ENCODE measurements at regions of chr2 and their contacts with region 1.

Region 1: GRCh38 chr2:126586317-126586716 is 69.6 kb upstream of the GYPC start:
- DNase-seq: peak in 4 of 5 donors; percentile 46 to 59 (median 50)
- ATAC-seq: peak; percentile 84 to 98 (median 90)
- H3K4me3 ChIP-seq: no peak overlapping the region
- H3K27ac ChIP-seq: peak overlapping the region in 11 of 12 donors; percentile 8 to 81 (median 71)
- H3K4me1 ChIP-seq: peaks cover 0 to 14% (median 0%) of the 10 kb centered on the region in 12 donors
- H3K27me3 ChIP-seq: no peaks in the 10 kb centered on the region
- CTCF ChIP-seq: no peak
- POLR2A ChIP-seq: no peak

Region 2: GRCh38 chr2:126699716-126700581 is 113.6 kb after region 1 on chr2:
- intact Hi-C with region 1: loop called in 1 of 10 experiments (anchors 2 kb)
- DNase-seq: peak in 2 of 5 donors; percentile 41 to 47
- ATAC-seq: peak in 2 of 4 donors; percentile 32 to 77
- H3K4me3 ChIP-seq: no peak overlapping the region
- H3K27ac ChIP-seq: peak overlapping the region in 11 of 12 donors; percentile 12 to 78 (median 64)
- H3K4me1 ChIP-seq: peaks cover 2 to 77% (median 38%) of the 10 kb centered on the region in 12 donors
- H3K27me3 ChIP-seq: no peaks in the 10 kb centered on the region
- CTCF ChIP-seq: no peak
- POLR2A ChIP-seq: no peak